Dendritic cell treated with granulocyte-macrophage colony-stimulating factor and Interleukin-4, amounts not matched to agents 40 ng/mL and 50 ng/mL, for 4 days (primary cell): ENCODE measurements at regions of chr11 and their contacts with region 1.

Region 1: DNA sequence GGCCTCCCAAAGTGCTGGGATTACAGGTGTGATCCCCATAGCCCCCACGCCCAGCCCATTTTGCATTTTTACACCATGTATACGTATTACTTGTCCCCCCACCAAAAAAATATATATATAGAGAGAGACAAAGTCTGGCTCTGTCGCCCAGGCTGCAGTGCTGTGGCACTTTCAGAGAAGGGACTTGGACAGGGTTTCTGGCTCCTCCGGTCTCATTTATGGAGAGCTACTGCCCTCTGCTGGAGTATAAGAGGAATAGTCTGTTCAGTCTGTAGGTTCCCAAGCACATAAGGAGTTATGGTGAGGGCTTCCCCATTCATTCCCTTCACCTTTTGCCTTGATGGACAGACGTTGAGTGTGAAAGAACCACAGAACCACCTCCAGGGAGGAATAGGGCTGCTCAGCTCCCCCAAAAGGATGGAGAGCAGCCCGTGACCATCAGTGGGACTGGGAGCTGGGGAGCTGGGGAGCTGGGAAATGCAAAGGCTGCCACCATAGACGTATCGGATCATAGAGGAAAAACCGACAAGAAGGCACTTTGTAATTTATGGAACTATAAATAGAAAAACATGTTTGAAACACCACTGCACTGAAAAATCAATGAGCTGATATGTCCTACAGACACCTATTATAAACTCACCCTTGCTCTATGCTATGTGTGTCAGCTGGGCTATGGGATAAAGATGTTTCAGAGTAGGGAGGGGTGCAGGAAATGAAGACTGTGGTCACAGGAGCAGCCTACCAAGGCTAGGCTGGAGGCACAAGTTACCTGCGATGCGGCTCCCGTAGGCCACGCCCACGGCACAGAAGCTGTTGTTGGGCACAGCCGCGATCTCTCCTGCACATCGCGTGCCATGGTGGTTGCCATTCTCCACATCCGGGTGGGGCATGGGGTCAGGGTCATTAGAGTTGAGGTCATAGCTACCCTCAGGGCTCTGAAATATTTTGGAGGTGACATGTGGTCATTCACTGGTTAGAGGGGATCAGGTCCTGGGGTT is 5.2 kb downstream of the PCSK7 start:
- H3K4me3 Mint-ChIP-seq: no peak overlapping the region
- H3K27ac Mint-ChIP-seq: peak overlapping the region; percentile 34
- H3K4me1 Mint-ChIP-seq: peaks cover 32% of the 10 kb centered on the region
- H3K27me3 Mint-ChIP-seq: no peaks in the 10 kb centered on the region

Region 2: DNA sequence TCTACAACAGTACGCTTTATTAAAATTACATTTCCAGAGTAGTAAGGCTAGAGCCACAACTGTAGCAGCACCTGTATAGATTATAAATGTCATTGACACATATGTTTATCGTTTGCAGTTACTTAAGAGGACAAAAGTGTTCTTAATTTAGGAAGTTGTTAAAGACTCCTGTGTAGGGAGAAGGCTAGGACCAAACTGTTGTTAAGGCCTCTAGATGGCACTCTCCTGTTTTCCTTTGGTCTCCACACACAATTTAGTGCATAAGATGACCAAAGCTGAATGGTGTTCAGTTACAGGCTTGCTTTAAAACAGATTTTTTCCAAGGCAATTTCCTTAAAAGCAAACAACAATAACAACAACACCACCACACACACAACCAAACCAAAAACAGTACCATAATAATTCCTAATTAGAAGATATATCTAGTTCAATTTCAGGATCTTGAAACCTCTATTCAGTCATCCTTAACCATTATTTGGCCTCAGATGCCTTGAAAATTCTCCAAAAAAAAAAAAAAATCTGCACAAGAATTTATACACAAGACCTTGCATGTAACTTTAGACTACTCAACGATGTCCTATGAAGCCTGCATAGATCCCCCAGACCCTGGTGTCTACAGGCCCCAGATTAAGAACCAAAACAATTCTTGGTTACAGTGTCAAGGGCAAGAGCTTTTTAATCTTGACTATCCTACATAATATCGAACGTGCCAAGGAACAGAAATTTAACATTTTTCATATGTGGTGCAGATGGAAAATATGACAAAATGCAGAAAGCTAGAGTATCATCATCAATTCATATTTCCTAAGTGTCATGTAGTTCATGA is 346.7 kb before region 1 on chr11:
- intact Hi-C with region 1: loop called (anchors 10 kb)
- H3K4me3 Mint-ChIP-seq: no peak overlapping the region
- H3K27ac Mint-ChIP-seq: no peak overlapping the region
- H3K4me1 Mint-ChIP-seq: peaks cover 5% of the 10 kb centered on the region
- H3K27me3 Mint-ChIP-seq: no peaks in the 10 kb centered on the region

Region 3: DNA sequence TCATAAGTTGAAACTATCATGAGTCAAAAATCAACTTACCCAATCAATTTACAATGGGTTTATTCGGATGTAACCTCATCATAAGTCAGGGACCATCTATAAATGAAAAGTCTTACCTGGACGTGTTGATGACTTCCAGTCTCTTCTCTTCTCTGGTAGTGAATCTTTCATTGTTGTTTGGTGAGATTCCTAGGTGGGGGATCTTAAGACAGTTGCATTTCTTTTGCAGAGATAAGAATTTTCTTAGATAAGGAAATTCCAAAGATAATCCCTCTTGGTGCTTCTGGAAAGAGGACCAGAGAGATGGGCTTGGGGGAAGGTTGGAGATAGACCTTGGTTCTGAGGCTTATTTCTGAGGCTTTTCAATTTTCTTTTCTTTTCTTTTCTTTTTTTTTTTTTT is 43.2 kb after region 1 on chr11:
- intact Hi-C with region 1: no loop called
- H3K4me3 Mint-ChIP-seq: no peak overlapping the region
- H3K27ac Mint-ChIP-seq: no peak overlapping the region
- H3K4me1 Mint-ChIP-seq: no peaks in the 10 kb centered on the region
- H3K27me3 Mint-ChIP-seq: no peaks in the 10 kb centered on the region